ENCODE measurements at regions of chr12 and their contacts with region 1.

Region 1: GRCh38 chr12:108562348-108563135 is at the start of gene ISCU:
- DNase-seq: peak; percentile 99
- H3K4me3 Mint-ChIP-seq: peak within 1 kb of the TSS; percentile 92
- H3K27ac Mint-ChIP-seq: peak within 1 kb of the TSS; percentile 98
- H3K4me1 Mint-ChIP-seq: peaks cover 18% of the 10 kb centered on the region
- H3K27me3 Mint-ChIP-seq: no peaks in the 10 kb centered on the region
- CTCF ChIP-seq: no peak
- total RNA-seq, gene ISCU: 71.6 and 85.8 TPM in 2 replicates

Region 2: DNA sequence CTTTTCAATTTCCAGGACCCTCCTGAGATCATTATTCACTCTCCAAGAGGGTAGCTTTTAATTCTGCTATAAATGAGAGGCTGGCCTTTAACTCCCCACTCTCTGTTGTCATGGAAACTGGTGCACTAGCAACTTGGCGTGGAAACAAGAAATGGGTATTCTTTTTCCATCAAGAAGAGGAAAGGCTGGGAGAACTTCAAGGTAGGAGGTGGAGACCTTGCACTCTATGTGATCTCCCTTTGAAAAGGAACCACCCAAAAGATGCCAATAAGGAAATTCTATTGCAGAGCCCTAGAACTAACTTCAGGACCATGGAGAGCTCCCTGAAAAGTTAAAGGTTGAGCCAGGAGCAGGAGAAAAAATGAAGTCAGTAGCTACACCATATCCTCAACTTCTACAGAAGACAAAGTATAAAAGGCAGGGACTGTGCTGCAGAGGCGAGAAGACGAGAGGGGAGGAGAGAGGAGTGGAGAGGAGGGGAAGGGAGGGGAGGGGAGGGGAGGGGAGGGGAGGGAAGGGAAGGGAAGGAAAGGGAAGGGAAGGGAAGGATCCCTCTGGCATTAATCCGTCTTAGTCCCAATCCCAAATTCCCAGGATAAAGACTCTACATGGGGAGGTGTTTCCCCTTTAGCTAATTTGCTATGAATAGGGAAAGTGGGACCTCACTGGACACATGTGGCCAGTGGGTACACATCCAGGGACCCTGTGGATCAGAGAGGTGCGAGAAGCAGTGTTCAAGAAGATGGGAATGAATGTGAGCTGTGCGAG is 94.2 kb before region 1 on chr12:
- CTCF ChIA-PET with region 1: no interaction called
- intact Hi-C with region 1: no loop called
- DNase-seq: peak; percentile 44
- H3K4me3 Mint-ChIP-seq: no peak overlapping the region
- H3K27ac Mint-ChIP-seq: no peak overlapping the region
- H3K4me1 Mint-ChIP-seq: no peaks in the 10 kb centered on the region
- H3K27me3 Mint-ChIP-seq: peaks cover 100% of the 10 kb centered on the region
- CTCF ChIP-seq: no peak

Region 3: GRCh38 chr12:108482717-108483212 is 79.8 kb before region 1 on chr12:
- CTCF ChIA-PET with region 1: no interaction called
- intact Hi-C with region 1: no loop called
- DNase-seq: peak; percentile 46
- H3K4me3 Mint-ChIP-seq: no peak overlapping the region
- H3K27ac Mint-ChIP-seq: no peak overlapping the region
- H3K4me1 Mint-ChIP-seq: peaks cover 13% of the 10 kb centered on the region
- H3K27me3 Mint-ChIP-seq: peaks cover 66% of the 10 kb centered on the region
- CTCF ChIP-seq: no peak

Region 4: DNA sequence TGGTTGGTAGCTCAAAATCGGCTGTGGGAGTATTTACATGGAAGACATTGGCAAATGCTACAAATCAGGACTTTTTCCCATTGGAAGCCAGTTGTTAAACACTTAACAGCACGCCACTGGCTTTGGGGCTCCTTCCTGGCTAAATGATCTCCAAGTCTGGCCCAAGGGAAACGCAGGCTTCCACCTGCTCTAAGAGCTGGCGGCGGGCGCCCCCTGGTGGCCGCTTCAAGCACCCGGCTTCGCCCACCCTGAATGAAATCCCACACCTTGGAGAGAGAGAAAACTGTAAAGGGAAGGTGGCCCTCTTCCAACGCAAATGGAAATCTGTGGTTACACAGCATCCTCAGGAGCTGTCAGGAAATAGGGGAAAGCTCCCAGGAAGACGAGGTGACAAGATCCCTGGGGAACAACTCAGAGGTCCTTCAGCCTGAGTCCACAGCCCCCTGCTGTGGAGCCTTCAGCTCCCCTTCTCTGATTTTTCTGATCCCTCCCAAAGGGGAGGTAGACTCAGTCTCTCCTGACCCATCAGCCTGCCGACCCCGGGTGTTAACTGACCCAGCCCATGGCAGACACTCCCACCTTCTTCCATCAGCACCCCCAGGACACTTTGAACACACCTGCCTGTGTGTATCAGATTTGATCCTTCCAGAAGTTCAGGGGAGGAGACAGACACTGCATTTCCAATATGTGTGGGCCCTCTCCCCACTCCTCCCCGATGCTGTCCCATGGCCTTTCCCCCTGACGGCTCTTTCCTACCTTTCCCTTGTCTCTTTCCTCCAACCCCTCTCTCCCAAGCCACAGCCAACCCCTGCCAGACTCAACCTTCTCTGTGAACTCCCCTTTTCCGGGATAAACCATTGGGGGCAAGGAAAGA is 55.8 kb after region 1 on chr12:
- CTCF ChIA-PET with region 1: interaction called, 19 read pairs
- intact Hi-C with region 1: loop called (anchors 1 kb)
- DNase-seq: peak; percentile 90
- H3K4me3 Mint-ChIP-seq: no peak overlapping the region
- H3K27ac Mint-ChIP-seq: no peak overlapping the region
- H3K4me1 Mint-ChIP-seq: peaks cover 16% of the 10 kb centered on the region
- H3K27me3 Mint-ChIP-seq: peaks cover 12% of the 10 kb centered on the region
- CTCF ChIP-seq: peak; percentile 95

Region 5: GRCh38 chr12:108722992-108723766 is 160.6 kb after region 1 on chr12:
- CTCF ChIA-PET with region 1: no interaction called
- intact Hi-C with region 1: loop called (anchors 5 kb)
- DNase-seq: no peak
- H3K4me3 Mint-ChIP-seq: peak overlapping the region; percentile 57
- H3K27ac Mint-ChIP-seq: peak overlapping the region; percentile 96
- H3K4me1 Mint-ChIP-seq: peaks cover 75% of the 10 kb centered on the region
- H3K27me3 Mint-ChIP-seq: no peaks in the 10 kb centered on the region
- CTCF ChIP-seq: no peak

Region 6: DNA sequence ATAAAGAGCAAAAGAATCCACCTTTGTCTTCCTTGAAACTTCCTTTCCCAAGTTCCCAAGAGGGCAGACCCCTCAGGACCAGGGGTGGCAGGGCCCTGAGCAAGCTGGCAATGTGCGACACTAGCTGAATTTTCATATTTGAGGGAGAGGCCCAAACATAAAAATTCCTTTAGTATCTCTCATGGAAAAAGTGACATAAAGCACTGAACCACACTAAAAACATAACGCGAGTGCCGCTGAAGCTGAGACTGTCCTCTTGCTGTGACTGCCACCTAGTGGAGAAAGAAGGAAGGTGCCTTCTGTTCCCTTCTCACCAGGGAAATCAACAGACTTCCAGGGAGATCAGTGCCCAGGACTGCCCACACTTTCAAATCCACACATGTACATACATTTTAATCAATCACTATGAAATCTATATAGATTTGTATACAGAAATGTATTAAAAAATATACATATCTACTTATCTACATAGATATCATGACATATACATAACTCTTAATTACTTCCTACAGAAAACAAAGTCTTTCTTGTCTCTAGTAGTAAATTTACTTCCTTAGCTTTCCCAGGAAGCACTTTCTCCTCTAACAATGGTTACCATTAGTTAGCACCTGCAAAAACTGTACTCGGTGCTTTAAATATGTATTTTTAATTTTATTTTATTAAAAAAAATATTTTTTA is 241.0 kb after region 1 on chr12:
- CTCF ChIA-PET with region 1: no interaction called
- intact Hi-C with region 1: loop called (anchors 1 kb)
- DNase-seq: peak; percentile 78
- H3K4me3 Mint-ChIP-seq: no peak overlapping the region
- H3K27ac Mint-ChIP-seq: no peak overlapping the region
- H3K4me1 Mint-ChIP-seq: no peaks in the 10 kb centered on the region
- H3K27me3 Mint-ChIP-seq: no peaks in the 10 kb centered on the region
- CTCF ChIP-seq: peak; percentile 94

Region 7: DNA sequence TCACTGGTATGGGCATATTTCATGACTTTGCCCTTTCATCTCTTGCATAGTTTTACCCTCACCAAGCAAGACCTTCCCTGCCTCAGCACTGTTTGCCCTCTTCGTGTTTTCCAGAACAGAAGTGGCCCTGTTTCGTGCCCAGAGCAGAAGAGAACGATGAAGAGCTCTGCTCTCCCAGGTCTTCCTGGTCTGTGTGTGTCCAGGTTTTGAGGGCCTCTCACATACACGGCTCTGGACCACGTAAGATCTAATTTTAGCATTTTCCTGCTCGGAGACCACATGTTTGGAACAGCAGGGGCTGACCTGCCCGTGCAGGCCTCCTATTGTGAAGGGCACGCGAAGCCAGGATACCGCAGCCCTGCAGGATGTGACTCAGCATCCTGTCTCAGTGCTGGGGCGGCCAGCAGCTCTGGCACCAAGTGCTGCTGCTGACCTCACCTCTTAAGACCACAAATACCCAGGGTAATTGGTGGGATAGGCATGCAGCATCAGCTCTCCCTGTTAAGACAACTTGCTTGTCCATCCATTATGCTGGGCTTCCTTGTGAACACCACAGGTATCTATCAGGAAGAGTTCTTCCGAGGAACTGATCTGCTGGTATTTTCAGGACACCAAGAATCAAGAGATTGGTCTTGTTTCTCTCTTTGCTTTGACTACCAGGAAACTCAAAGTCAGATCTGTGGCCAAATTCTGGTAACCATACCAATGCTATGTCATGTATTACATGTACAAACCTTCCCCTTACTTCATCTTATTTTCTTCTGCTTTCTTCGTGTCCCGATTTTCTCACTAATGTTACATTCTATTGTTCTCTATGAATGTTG is 275.9 kb after region 1 on chr12:
- CTCF ChIA-PET with region 1: no interaction called
- intact Hi-C with region 1: loop called (anchors 10 kb)
- DNase-seq: peak; percentile 94
- H3K4me3 Mint-ChIP-seq: peak overlapping the region; percentile 66
- H3K27ac Mint-ChIP-seq: peak overlapping the region; percentile 100
- H3K4me1 Mint-ChIP-seq: peaks cover 65% of the 10 kb centered on the region
- H3K27me3 Mint-ChIP-seq: no peaks in the 10 kb centered on the region
- CTCF ChIP-seq: no peak

Region 8: GRCh38 chr12:108950991-108951739 is 388.6 kb after region 1 on chr12:
- CTCF ChIA-PET with region 1: no interaction called
- intact Hi-C with region 1: loop called (anchors 5 kb)
- DNase-seq: peak; percentile 81
- H3K4me3 Mint-ChIP-seq: no peak overlapping the region
- H3K27ac Mint-ChIP-seq: no peak overlapping the region
- H3K4me1 Mint-ChIP-seq: no peaks in the 10 kb centered on the region
- H3K27me3 Mint-ChIP-seq: peaks cover 36% of the 10 kb centered on the region
- CTCF ChIP-seq: peak; percentile 87

Region 9: DNA sequence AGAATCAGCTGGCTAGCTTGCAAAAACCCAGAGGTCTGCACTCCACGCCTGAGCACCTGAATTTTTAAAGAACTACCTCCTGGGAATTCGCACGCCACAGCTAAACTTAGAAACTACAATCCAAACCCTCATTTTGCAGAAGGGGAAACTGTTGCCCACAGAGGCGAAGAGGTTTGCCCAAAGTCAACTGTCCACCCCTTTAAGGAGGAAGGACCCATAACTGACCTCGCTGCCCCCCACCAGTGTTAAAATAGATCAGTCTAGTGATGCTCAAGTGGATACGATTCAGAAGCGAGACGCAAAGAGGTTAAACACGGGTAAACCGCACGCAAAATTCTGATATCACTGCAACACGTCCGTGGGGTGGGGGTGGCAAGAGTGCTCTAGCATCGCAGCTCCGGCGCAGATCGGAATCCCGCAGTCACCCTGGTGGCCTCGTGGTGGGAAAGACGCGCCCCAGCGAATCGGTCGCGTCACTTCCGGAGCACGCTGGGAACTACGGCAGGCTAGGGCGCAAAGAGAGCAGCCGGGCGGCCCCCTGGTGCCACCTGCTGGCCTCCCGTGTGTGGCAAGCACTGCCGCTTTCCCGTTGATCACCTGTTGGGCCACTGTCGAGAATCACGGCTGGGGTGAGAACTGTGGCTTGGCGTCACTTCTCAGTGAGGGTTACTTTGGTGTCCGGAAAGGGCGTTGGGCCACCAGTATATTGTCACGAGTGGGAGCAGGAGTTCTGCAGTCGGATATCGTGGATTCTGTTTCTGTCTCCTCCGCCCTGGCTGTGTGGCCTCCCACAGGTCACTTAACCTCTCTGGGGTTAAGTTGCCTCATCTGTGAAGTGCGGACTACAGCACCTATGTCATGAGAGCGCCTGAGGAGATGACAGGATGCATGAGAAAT is 530.7 kb after region 1 on chr12 and contains the start of gene ALKBH2:
- CTCF ChIA-PET with region 1: no interaction called
- intact Hi-C with region 1: loop called (anchors 5 kb)
- DNase-seq: peak; percentile 96
- H3K4me3 Mint-ChIP-seq: peak within 1 kb of the TSS; percentile 68
- H3K27ac Mint-ChIP-seq: peak within 1 kb of the TSS; percentile 53
- H3K4me1 Mint-ChIP-seq: peaks cover 13% of the 10 kb centered on the region
- H3K27me3 Mint-ChIP-seq: no peaks in the 10 kb centered on the region
- CTCF ChIP-seq: peak; percentile 95
- total RNA-seq, gene ALKBH2: 43.1 and 43.2 TPM in 2 replicates